Posterior vena cava (tissue), 2 donors: ENCODE measurements at regions of chrX and their contacts with region 1.

Region 1: DNA sequence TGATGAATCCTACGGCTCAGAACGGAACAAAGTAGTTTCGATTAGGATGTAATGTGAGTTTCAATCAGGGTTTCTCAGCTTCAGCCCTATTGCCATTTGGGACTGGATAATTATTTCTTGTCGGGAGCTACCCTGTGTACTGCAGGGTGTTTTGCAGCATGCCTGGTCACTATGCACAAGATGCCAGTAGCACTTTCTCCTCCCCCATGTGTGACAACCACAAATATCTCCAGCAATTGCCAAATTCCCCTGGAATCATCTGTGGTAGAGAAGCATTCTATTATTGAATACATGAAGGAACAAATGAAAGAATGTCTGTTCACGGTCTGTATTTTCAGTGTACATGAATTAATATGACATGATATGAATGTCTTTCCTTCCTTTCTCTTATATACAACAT is 782.9 kb upstream of the FTHL17 start:
- DNase-seq: no peak

Region 2: DNA sequence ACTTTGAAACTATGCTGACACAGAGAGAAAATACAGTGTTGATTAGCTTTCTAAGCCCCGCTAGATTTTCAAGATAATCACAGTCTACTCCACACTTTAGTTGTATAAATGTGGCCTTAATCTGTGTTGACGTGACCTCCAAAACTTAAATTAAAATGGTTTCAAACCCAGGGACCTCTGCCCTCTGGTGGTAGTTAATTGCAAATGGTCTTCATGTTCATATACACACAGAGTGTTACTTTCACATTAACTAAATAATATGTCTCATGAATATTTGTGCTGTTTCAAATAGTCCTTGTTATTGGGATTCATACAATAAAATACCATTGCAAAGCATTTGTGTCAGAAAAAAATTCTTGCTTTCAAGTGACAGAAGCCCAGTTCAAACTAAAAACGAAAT is 1341.4 kb before region 1 on chrX:
- intact Hi-C with region 1: no loop called
- DNase-seq: no peak

Region 3: GRCh38 chrX:31871992-31872391 is 17.3 kb after region 1 on chrX:
- intact Hi-C with region 1: loop called in 1 of 2 experiments (anchors 1 kb)
- DNase-seq: no peak

Region 4: DNA sequence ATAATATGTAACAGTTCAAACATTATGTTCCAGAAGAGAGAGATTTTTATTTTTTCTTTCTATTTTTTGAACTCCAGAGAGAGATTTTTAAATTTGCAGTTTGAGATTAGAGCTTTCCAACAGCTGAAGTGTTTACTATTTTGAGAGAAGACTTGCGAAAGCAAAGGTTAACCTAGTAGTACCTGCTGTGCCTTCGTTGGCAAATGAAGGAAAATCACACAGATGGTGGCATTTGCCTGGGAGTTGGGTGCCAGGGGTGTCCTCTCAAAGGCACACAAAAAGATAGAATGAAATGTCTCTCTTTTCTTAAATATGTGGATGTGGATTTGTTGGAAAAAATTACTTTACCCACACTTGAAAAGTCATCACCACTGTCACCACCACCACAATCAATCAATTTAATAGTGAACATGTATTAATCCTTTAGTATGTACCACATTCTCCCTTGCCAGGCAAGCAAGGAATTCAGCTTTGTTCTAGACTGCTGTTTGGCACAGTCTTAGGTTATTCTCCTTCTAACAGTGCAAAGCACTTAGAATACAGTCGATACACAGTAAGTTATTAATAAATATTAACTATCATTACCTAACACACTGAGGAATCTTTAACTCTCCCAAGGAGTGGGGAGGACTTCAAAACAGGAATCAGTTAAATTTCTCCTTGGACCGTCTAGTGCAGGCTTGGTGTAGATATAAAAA is 55.3 kb after region 1 on chrX:
- intact Hi-C with region 1: no loop called
- DNase-seq: no peak

Region 5: DNA sequence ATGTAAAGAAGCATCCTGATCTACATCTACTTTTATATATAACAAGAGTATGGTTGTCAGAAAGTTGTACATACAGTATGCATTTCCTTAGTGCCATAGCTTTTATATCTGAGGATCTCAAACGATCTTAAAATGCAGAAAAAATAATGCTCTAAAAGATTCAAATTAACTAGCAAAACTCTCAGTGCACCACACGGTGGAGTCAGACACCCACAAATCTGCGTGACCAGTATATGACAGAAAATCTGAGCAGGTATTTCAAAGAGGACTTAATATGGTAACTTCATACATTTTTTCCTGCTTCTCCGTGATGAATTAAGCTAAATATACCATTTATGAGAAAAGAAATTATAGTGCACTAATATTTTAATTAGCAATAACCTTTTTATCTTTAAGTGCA is 553.7 kb after region 1 on chrX:
- intact Hi-C with region 1: no loop called
- DNase-seq: no peak